Sciatic nerve (tissue), 2 donors: ENCODE measurements at regions of chr4 and their contacts with region 1.

Region 1: GRCh38 chr4:101347557-101348366 is 436 bp upstream of the PPP3CA start:
- DNase-seq: peak; percentile 100
- ATAC-seq: peak; percentile 98

Region 2: DNA sequence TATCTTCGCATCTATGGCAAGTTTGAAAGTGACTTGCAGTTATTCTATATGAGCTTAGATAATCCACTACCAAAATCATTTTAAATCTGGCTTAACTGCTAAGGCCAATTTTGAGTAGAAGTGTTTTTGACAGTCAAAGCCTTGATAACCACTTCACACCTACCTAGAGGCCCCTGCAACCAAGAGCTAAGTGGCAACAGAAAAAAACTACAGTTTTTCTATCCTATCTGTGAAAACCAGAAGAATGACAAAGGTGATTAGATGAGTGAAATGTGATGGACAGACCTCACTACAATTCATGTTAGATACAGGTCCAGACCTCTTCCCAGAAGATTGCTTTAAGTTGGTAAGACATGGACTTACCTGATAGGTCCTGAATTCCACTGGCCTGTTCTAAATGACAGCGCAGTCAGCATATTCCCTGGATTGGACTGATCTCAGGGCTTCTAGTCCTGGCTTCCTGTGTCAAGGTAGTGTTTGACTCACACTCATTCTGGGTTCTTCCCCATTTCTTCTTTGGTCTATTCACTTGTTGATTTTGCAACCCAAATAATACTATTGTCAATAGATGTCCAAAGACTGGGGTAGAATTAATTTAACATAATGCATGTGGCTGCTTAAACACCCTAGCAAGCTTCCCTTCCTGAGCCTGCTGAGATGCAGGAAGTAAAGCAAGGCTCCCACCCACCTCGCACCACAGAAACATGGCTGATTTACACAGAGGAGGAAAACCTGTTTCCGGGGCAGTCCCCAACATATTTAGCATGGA is 65.5 kb before region 1 on chr4:
- intact Hi-C with region 1: loop called (anchors 10 kb)
- DNase-seq: no peak
- ATAC-seq: no peak

Region 3: DNA sequence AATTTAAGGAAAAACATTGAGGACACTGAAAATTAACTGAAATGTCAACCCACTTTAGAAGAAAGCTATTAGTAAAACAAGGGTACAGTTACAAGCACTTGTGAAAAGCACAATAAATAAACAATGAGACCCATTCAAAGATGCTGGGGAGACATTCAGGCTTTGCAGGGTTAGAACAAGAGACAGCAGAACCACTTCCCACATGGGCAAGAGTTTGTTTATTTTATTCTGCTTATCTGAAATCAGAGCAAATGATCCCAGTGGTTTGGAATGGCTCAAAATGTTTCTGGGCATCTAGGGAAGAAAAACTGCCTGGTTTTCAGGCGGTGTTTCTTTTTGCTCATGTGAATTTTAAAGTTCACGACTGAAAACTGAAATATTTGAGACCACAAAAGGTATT is 42.8 kb before region 1 on chr4:
- intact Hi-C with region 1: no loop called
- DNase-seq: no peak
- ATAC-seq: peak; percentile 67